ENCODE measurements at regions of chr7 and their contacts with region 1.

Region 1: DNA sequence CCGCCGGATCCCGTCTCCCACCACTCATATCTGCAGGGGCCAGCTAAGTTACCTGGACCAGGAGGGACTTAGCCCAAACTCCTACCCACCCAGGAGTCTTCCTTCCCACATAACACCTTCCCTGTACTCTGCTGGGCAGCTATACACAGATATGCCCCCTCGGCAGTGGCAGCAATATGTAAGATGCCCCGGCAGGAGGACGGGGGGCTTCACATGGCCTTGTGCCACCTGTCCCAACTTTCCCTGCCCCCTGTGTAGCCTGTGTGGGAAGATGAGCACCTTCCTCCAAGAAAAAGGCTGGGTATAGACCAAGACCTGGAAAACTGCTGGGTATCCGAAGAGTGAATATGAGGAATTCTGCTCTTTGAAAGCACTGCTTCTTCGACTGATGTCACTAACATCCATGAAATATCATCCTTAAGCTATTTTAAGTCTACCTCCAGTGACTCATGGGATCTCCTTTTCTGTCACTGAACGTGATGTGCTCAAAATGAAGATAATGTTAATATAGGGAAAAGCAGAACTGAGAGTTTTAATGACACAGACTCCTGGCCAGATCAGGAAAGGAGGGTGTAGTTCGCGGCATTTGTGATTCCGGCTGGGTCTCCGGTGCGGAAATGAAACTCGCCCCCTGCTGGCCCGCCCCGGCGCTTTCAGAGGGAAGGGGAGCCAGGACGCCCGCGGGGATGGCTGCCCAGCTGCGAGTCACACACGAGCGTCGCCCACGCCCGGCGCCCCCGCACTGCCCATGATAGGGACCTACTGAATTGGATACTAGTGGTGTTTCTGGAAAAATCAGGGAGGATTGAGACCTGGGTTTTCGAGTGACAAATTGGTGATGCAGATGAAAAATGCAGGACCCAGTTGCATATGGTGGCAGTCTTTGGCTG is 256.9 kb upstream of the NFE2L3 start:
- DNase-seq: peak; percentile 65 to 84 (median 78)
- H3K4me3 ChIP-seq: peak overlapping the region; percentile 3
- H3K27ac ChIP-seq: peak overlapping the region in 1 of 2 donors; percentile 68
- H3K4me1 ChIP-seq: peaks cover 6% of the 10 kb centered on the region
- H3K27me3 ChIP-seq: no peaks in the 10 kb centered on the region
- CTCF ChIP-seq: peak; percentile 52 to 70 (median 59)
- EP300 ChIP-seq: no peak
- POLR2A ChIP-seq: no peak

Region 2: DNA sequence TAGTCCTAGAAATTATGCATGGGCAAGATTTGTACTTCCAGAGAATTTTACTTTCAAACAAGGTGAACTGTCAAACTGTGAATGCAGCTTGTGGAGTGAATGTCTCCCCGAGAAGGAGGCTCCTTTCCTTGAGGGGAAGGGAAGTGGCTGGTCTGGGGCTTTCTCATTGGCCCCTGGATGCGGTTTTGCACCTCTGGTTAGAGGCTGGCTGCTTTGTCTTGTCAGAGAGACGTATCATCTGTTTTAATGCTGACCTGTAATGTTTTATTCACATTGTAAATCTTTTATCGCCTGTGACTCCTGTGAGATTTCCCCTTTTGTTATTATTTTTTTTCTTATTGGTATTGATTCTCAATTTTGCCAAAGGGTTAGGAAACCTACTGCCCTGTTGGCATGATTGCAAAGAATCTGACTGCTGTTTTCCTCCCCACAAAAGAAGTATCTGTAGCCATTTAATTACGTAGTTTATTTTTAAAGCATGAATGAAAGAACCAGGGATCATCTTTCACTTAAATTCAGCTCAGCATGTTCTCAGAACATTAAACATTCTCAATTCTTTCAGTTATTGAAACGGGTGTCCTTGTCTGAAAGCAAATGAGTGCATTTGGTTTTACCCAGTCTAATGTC is 18.6 kb after region 1 on chr7:
- intact Hi-C with region 1: no loop called
- DNase-seq: no peak
- H3K4me3 ChIP-seq: no peak overlapping the region
- H3K27ac ChIP-seq: no peak overlapping the region
- H3K4me1 ChIP-seq: no peaks in the 10 kb centered on the region
- H3K27me3 ChIP-seq: no peaks in the 10 kb centered on the region
- CTCF ChIP-seq: no peak
- EP300 ChIP-seq: no peak
- POLR2A ChIP-seq: no peak

Region 3: DNA sequence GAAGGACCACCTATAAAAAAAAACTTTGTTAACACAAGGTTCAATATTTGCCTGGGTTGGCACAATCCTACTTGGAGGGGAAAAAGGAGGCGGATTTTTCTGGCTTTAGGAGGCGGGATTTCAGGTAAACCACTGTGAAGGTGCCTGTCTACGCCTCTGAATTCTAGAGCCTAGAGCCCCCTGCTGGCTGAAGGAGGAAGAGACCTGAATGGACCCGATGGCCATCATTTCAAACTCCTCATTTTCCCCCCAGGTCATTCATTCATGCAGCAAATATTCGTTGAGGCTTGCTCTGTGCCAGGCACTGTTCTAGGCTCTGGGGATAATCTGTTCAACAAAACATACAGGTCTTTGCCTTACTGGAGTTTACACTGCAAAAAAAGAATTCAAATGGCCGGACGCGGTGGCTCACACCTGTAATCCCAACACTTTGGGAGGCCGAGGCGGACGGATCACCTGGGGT is 166.6 kb after region 1 on chr7:
- intact Hi-C with region 1: loop called in 2 of 4 experiments (anchors 5 kb)
- DNase-seq: peak; percentile 38 to 72 (median 63)
- H3K4me3 ChIP-seq: no peak overlapping the region
- H3K27ac ChIP-seq: no peak overlapping the region
- H3K4me1 ChIP-seq: no peaks in the 10 kb centered on the region
- H3K27me3 ChIP-seq: no peaks in the 10 kb centered on the region
- CTCF ChIP-seq: peak; percentile 21 to 52 (median 36)
- EP300 ChIP-seq: no peak
- POLR2A ChIP-seq: no peak

Region 4: DNA sequence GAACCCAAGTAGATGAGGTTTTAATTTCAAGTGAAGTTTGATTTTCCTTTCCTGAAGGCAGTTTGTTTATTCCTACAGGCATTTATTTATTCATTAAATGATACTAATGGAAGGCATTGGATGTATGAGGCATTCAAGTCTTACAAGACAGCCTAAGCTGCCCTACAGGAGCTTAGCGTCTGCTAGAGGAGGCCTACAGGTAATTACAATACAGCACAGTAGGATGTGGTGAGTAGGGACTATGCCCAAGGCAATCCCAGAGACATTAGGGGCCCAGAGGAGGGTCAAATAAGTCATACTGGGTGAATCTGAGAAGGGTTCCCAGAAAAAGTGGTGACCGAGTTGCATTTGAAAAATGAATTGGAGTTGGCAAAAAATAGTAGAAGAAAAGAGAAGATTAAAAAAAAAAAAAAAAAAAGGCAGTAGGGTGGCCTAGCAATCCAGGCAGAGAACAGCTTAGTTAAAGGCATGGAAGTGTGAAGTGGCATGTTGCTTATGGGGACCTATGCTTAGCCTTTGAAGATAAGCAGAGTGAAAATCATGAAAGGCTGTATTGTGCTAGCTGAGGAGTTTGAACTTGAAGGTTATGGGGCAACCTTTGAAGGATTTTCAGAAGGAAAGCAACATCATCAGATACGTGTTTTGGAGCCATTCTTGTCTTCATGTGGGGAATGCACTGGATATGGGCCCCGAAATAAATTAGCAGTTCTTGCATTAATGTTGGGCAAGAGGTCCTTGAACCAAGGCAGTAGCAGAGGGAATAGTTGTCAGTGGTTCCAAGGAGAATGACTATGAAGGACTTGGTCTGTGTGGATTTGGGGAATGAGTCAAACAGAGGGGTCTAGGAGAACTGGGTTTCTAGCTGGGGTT is 462.0 kb after region 1 on chr7:
- intact Hi-C with region 1: loop called in 1 of 4 experiments (anchors 5 kb)
- DNase-seq: no peak
- H3K4me3 ChIP-seq: no peak overlapping the region
- H3K27ac ChIP-seq: no peak overlapping the region
- H3K4me1 ChIP-seq: no peaks in the 10 kb centered on the region
- H3K27me3 ChIP-seq: no peaks in the 10 kb centered on the region
- CTCF ChIP-seq: no peak
- EP300 ChIP-seq: no peak
- POLR2A ChIP-seq: no peak

Region 5: DNA sequence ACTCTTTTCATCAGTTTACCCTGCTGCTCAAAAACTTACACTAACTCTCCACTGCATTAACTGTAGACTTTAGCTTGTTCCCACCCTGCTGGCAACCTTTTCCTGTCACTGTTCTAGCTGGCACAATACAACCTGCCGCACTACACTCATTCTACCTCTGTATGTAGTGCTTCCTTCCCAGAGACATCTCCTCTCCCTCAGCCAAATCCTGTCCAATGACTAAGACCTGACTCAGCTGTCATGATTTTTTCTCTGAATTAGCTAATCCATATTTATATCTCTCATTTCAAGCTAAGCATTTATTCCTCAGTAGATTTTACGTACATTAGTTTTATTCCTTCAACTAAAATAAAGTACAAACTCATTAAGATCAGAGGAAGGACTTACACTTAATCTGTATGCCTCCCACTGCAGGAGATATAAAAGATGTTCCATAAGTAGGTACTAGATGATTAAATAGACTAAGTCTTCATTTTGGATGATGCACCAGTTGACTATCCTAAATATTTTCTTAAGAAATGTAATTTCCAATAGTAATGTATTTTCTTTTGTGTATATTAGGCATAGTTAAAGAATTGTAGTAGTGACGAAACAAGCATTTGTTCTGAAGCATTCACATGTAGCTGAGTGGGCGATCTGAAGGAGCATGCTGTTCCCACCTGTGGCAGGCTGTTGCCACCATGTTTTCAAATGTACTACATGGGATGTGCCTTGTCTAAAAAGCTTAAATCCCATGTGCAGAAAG is 780.2 kb after region 1 on chr7:
- intact Hi-C with region 1: loop called in 1 of 4 experiments (anchors 10 kb)
- DNase-seq: no peak
- H3K4me3 ChIP-seq: no peak overlapping the region
- H3K27ac ChIP-seq: no peak overlapping the region
- H3K4me1 ChIP-seq: no peaks in the 10 kb centered on the region
- H3K27me3 ChIP-seq: no peaks in the 10 kb centered on the region
- CTCF ChIP-seq: no peak
- EP300 ChIP-seq: no peak
- POLR2A ChIP-seq: no peak

Region 6: GRCh38 chr7:27160546-27161213 is 1265.5 kb after region 1 on chr7:
- intact Hi-C with region 1: loop called in 2 of 4 experiments (anchors 5 to 10 kb)
- DNase-seq: peak; percentile 71 to 89 (median 87)
- H3K4me3 ChIP-seq: peak overlapping the region; percentile 43
- H3K27ac ChIP-seq: no peak overlapping the region
- H3K4me1 ChIP-seq: peaks cover 4% of the 10 kb centered on the region
- H3K27me3 ChIP-seq: peaks cover 9% of the 10 kb centered on the region
- CTCF ChIP-seq: peak; percentile 96 to 98 (median 97)
- EP300 ChIP-seq: no peak
- POLR2A ChIP-seq: no peak